Kidney (tissue), 22 donors: ENCODE measurements at regions of chr19 and their contacts with region 1.

Region 1: DNA sequence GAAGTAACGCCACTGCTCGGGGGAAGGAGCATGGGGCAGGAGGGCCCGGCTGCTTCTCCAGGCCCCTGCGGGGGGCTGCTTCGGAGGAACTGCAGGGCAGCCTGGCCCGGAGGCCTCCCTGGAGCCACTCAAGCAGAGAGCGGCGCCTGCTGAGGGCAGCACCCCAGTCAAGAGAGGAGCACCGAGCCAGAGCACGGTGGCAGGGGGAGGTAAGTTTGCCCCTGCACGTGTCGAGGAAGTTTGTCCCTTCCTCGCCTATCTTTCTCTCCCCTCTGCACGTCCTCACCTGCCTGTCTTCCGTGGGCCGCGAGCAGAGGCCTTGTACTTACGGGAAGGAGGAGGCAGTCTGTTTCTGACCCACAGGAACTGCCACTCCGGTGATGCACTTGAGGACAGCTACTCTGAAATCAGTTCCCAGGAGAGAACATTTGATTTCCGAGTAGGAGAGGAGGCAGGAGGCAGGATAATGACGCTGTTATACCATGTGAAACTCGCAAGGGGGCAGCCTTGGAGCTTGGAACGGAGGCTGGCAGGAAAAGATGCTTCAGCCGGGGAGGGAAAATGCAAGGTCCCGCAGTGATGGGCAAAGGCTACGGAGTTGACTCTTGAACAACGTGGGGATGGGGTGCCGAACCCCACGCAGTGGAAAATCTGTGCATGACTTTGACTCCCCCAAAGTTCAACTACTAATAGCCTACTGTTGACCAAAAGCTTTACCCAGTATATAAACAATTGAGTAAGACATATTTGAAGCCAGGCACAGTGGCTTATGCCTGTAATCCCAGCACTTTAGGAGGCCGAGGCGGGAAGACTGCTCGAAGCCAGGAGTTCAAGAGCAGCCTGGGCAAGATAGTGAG is 5.0 kb downstream of the FFAR1 start:
- DNase-seq: peak; percentile 79 to 87 (median 80)
- H3K4me3 ChIP-seq: no peak overlapping the region
- H3K27ac ChIP-seq: no peak overlapping the region
- H3K4me1 ChIP-seq: peaks cover 0 to 2% (median 0%) of the 10 kb centered on the region in 3 donors
- H3K27me3 ChIP-seq: no peaks in the 10 kb centered on the region
- CTCF ChIP-seq: peak; percentile 90

Region 2: DNA sequence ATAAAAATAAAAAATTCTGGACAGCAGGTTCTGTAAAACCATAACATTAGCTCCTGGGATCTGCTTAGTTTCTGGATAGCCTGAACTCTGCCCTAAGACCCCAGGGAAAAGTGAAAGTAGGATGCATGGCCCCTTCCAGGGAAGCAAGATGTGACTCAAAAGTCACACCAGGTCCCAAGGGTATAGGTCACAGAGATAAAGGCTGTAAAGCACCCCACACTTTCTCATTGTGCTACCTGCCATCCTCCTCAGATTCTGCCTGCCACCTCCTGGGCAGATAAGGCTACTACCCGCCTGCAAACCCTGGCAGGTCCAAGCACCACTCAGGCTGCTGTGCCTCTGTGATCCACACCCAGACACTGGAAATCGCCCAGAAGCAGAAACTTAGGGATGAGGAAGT is 116.0 kb after region 1 on chr19:
- intact Hi-C with region 1: loop called (anchors 10 kb)
- DNase-seq: peak in 4 of 5 donors; percentile 43 to 76 (median 50)
- H3K4me3 ChIP-seq: no peak overlapping the region
- H3K27ac ChIP-seq: no peak overlapping the region
- H3K4me1 ChIP-seq: no peaks in the 10 kb centered on the region
- H3K27me3 ChIP-seq: no peaks in the 10 kb centered on the region
- CTCF ChIP-seq: peak; percentile 70